BJ (cell line): ENCODE measurements at regions of chr11 and their contacts with region 1.

Region 1: DNA sequence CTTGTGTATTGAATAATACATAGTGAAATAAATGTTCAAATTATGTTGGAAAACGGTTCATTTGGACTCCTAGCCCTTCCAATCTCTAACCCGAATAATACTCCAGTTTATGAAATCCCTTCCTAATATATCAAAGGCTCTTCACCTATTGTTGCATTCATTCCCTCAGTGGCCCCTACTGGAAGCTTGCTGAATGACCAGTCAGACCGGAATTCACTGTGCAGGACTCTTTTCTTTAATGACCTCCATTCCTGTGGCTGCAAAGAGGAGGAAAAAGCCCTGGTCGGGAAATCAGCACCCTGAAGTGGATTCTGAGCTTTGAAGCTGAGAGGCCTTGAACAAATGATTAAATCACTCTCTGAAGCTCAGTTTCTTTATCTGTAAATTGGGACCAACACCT is 19.1 kb upstream of the RCN1 start:
- DNase-seq: no peak
- H3K4me3 ChIP-seq: no peak overlapping the region
- H3K27me3 ChIP-seq: peaks cover 20% of the 10 kb centered on the region
- CTCF ChIP-seq: peak; percentile 70

Region 2: GRCh38 chr11:32034149-32034548 is 37.7 kb before region 1 on chr11:
- CTCF ChIA-PET with region 1: no interaction called
- POLR2A ChIA-PET with region 1: no interaction called
- DNase-seq: peak; percentile 98
- H3K4me3 ChIP-seq: no peak overlapping the region
- H3K27me3 ChIP-seq: no peaks in the 10 kb centered on the region; the same call in 1 of the 2 replicates
- CTCF ChIP-seq: no peak

Region 3: DNA sequence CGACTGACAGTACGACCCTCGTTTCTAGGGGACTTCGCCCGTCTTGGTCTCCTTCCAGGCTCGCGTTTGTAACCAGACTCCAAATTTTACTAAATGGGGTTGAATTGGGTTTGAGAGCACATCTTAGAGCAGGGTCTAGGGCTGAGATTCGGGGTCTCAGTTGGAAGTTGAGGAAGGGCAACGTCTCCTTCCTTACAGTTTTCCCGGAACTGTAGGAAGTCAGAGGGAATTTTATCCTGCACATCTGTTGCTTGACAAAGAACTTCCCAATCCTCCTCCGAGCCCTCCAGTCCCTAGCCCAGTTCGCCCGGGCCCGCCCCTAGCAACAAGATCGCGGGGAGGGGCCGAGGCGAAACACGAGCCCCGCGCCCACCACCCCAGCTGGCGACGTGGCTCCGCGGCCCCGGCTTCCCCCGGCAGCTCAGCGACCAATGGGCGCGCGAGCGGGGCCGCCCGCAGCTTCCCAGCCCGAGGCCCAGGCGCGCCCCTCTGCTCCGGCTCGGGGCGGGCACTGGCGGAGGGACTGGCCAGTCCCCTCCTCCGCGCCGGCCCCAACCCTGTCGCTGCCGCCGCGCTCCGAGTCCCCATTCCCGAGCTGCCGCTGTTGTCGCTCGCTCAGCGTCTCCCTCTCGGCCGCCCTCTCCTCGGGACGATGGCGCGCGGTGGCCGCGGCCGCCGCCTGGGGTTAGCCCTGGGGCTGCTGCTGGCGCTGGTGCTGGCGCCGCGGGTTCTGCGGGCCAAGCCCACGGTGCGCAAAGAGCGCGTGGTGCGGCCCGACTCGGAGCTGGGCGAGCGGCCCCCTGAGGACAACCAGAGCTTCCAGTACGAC is 18.9 kb after region 1 on chr11 and contains the start of gene RCN1:
- CTCF ChIA-PET with region 1: interaction called, 12 read pairs
- POLR2A ChIA-PET with region 1: interaction called, 3 read pairs
- DNase-seq: no peak
- H3K4me3 ChIP-seq: peak within 1 kb of the TSS; percentile 66
- H3K27me3 ChIP-seq: no peaks in the 10 kb centered on the region
- CTCF ChIP-seq: no peak
- polyA plus RNA-seq, gene RCN1: 131 and 262 TPM in 2 replicates